ENCODE measurements at regions of chr14 and their contacts with region 1.

Region 1: GRCh38 chr14:74493343-74494261 is at the start of gene ISCA2:
- DNase-seq: peak; percentile 99
- H3K4me3 ChIP-seq: peak within 1 kb of the TSS; percentile 76 to 96 (median 80)
- H3K27ac ChIP-seq: peak within 1 kb of the TSS; percentile 71
- H3K4me1 ChIP-seq: peaks cover 37% of the 10 kb centered on the region
- H3K27me3 ChIP-seq: no peaks in the 10 kb centered on the region
- CTCF ChIP-seq: no peak
- total RNA-seq, gene ISCA2: 6.7 to 18.2 TPM

Region 2: DNA sequence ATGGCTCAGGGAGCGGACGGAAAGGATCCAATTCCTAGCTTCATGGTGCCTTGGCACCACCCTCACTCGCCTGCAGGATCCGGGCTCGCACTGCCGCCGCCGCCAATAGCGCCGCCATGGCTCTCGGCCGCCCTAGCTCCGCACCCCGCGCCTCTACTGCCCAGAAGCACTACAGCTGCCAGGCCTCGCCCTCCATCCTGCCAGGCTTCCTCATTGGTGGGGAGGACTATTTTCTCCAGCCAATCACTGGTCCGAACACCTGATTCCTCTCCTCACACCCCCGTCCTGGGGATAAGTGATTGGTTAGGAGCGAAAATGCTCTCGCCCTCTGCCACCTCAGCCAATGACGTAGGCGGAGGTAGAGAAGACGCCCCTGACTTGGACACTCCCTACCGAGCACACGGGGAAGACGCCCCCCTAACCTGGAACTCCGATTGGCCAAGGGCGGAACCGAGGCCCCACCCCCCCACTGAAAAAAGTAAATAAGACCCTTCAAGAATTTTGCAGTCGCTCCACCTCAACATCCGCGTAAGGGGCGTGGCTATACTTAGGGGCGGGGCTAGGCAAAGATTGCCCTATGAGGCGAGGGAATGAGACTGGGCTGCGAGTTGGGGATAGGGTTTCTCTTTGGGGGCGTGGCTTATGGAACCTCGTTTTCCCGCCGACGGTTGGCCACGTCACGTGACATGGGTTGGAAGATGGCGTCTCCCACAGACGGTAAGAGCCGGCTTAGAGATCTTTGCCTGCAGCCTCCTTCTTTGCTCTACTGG is 409.1 kb before region 1 on chr14 and contains the starts of genes ALDH6A1 and LIN52:
- CTCF ChIA-PET with region 1: no interaction called
- dilution Hi-C with region 1: no loop called
- in situ Hi-C with region 1: no loop called
- intact Hi-C with region 1: no loop called
- DNase-seq: peak; percentile 100
- H3K4me3 ChIP-seq: peak within 1 kb of the TSS; percentile 76 to 79 (median 77)
- H3K27ac ChIP-seq: peak within 1 kb of the TSS; percentile 93
- H3K4me1 ChIP-seq: peaks cover 16% of the 10 kb centered on the region
- H3K27me3 ChIP-seq: no peaks in the 10 kb centered on the region
- CTCF ChIP-seq: peak in 1 of 2 donors; percentile 14
- total RNA-seq, gene ALDH6A1: 8.4 to 10.2 TPM
- total RNA-seq, gene LIN52: 3.8 to 10.0 TPM

Region 3: DNA sequence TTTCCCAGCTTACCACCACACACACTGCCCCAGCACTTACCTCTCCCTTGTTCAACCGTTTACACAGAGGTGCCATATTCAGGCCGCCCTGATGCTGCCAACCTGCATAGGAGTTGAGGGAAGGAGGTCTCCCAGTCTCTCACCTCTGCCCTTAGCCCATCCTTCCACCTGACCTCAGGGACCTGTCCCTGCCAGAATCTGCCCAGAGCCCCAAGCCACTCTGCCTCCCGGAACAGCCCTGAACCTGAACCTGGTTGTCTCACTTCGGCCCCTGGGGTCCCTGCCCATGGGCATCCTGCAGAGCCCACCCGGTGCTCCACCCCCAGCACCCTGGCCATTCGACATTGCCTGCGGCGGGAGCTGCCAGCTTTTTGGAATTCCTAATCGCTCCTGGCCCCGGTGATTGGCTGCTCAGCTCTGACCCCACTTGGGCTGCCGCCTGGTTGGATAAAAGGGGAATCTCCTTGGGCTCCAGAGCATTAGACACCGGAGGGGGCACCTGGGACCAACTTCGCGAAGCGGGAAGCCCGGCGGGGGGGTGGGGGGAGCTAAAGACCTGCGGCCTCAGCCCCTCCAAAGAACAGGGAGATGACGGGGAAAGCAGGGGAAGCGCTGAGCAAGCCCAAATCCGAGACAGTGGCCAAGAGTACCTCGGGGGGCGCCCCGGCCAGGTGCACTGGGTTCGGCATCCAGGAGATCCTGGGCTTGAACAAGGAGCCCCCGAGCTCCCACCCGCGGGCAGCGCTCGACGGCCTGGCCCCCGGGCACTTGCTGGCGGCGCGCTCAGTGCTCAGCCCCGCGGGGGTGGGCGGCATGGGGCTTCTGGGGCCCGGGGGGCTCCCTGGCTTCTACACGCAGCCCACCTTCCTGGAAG is 254.4 kb before region 1 on chr14 and contains the start of gene VSX2:
- CTCF ChIA-PET with region 1: no interaction called
- dilution Hi-C with region 1: no loop called
- in situ Hi-C with region 1: no loop called
- intact Hi-C with region 1: no loop called
- DNase-seq: no peak
- H3K4me3 ChIP-seq: no peak within 1 kb of the TSS
- H3K27ac ChIP-seq: no peak within 1 kb of the TSS
- H3K4me1 ChIP-seq: peaks cover 5% of the 10 kb centered on the region
- H3K27me3 ChIP-seq: peaks cover 58% of the 10 kb centered on the region
- CTCF ChIP-seq: no peak
- total RNA-seq, gene VSX2: not detected

Region 4: GRCh38 chr14:74395094-74395493 is 98.5 kb before region 1 on chr14:
- CTCF ChIA-PET with region 1: no interaction called
- dilution Hi-C with region 1: loop called (anchors 5 kb)
- in situ Hi-C with region 1: no loop called
- intact Hi-C with region 1: no loop called
- DNase-seq: no peak
- H3K4me3 ChIP-seq: no peak overlapping the region
- H3K27ac ChIP-seq: no peak overlapping the region
- H3K4me1 ChIP-seq: no peaks in the 10 kb centered on the region
- H3K27me3 ChIP-seq: peaks cover 3% of the 10 kb centered on the region
- CTCF ChIP-seq: no peak

Region 5: GRCh38 chr14:74444866-74445265 is 48.7 kb before region 1 on chr14:
- CTCF ChIA-PET with region 1: no interaction called
- dilution Hi-C with region 1: loop called (anchors 5 kb)
- in situ Hi-C with region 1: no loop called
- intact Hi-C with region 1: no loop called
- DNase-seq: no peak
- H3K4me3 ChIP-seq: no peak overlapping the region
- H3K27ac ChIP-seq: no peak overlapping the region
- H3K4me1 ChIP-seq: no peaks in the 10 kb centered on the region
- H3K27me3 ChIP-seq: no peaks in the 10 kb centered on the region
- CTCF ChIP-seq: no peak

Region 6: DNA sequence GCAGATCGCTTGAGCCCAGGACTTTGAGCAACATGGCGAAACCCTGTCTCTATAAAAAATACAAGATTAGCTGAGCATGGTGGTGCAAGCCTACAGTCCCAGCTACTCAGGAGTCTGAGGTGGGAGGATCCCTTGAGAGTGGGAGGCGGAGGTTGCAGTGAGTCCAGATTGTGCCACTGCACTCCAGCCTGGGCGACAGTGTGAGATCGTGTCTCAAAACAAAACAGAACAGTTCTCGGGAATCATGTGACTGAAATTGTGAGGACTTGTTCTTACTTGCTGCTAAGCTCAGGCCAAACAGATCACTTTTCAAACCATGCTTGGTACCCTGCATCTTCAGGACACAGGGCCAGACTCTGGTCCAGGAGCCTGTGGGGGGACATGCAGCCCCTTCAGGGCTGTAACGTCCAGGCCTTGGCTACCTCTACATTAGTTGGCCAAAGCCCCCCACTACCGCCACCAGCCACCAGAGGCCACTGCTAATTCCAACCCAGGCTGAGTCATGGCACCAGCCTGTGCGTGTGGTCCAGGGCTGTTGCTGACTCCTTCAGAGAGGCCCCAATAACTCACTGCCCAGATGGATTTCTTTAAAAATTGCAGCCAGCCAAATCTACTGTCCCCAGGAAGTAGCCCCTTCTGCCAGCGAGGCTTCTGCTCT is 34.2 kb before region 1 on chr14:
- CTCF ChIA-PET with region 1: no interaction called
- dilution Hi-C with region 1: no loop called
- in situ Hi-C with region 1: no loop called
- intact Hi-C with region 1: loop called (anchors 2 kb)
- DNase-seq: peak; percentile 37
- H3K4me3 ChIP-seq: no peak overlapping the region
- H3K27ac ChIP-seq: no peak overlapping the region
- H3K4me1 ChIP-seq: no peaks in the 10 kb centered on the region
- H3K27me3 ChIP-seq: no peaks in the 10 kb centered on the region
- CTCF ChIP-seq: peak; percentile 69 to 79

Region 7: GRCh38 chr14:74558655-74559054 is 65.1 kb after region 1 on chr14:
- CTCF ChIA-PET with region 1: no interaction called
- dilution Hi-C with region 1: no loop called
- in situ Hi-C with region 1: no loop called
- intact Hi-C with region 1: no loop called
- DNase-seq: no peak
- H3K4me3 ChIP-seq: no peak overlapping the region
- H3K27ac ChIP-seq: no peak overlapping the region
- H3K4me1 ChIP-seq: peaks cover 11% of the 10 kb centered on the region
- H3K27me3 ChIP-seq: no peaks in the 10 kb centered on the region
- CTCF ChIP-seq: no peak

Measured in mammary epithelial cell (primary cell).